Activated naive CD4-positive, alpha-beta T cell treated with anti-CD3 and anti-CD28 coated beads for 36 hours (primary cell): ENCODE measurements at regions of chr5 and their contacts with region 1.

Region 1: DNA sequence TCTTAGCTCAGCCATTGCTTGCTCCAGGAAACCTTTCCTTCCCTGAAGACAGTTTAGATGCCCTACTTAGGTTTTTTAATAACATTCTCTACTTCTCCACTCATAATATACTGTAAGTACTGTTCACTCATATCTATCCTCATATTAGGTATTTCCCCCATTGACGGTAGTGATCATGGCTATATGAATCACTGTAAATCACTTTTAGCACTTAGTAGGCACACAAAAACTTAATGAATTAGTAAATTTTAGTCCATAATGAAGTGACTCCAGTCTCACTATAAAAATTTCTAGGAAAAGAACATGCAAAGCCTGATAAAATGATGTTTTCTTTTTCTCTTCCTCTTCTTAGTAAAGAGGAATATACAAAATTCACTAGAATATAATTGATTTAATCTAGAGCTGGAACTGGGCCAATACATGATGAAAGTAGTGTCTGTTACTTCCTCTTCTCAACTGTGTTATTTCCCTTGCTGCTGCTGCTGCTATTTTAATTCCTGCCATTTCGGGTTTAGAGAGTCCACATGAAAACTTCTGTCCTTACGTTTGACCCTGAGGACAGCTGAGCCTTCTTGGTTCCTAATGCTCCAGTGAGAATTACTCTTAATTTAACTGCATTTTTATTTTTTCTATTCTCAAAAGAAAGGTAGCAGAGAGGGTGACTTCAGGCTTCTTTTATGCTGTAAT is 73.5 kb downstream of the LNPEP start:
- DNase-seq: no peak
- H3K4me3 Mint-ChIP-seq: no peak overlapping the region
- H3K27ac Mint-ChIP-seq: peak overlapping the region; percentile 62
- H3K4me1 Mint-ChIP-seq: peaks cover 18% of the 10 kb centered on the region
- H3K27me3 Mint-ChIP-seq: no peaks in the 10 kb centered on the region

Region 2: GRCh38 chr5:96957254-96958049 is 51.9 kb before region 1 on chr5:
- CTCF ChIA-PET with region 1: interaction called, 3 read pairs
- intact Hi-C with region 1: loop called (anchors 1 kb)
- DNase-seq: peak; percentile 73
- H3K4me3 Mint-ChIP-seq: peak overlapping the region; percentile 64
- H3K27ac Mint-ChIP-seq: peak overlapping the region; percentile 86
- H3K4me1 Mint-ChIP-seq: peaks cover 77% of the 10 kb centered on the region
- H3K27me3 Mint-ChIP-seq: no peaks in the 10 kb centered on the region

Region 3: DNA sequence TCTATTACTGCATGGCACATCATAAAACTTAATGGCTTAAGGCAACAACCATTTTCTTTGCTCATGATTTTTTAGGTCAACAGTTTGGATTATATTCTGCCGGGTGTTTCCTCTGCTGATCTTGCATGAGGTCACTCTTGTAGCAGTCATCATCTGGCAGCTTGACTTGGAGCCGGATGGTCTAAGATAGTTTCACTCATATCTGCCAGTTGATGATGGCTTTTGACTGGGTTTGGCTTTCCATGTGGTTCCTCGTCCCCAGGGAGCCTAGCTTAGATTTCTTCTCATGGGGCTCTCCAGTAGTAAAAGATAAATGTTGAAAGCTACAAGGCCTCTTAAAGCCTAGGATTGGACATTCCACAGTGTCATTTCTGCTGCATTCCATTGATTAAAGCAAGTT is 46.1 kb before region 1 on chr5:
- CTCF ChIA-PET with region 1: no interaction called
- intact Hi-C with region 1: loop called (anchors 1 kb)
- DNase-seq: peak; percentile 47
- H3K4me3 Mint-ChIP-seq: peak overlapping the region; percentile 69
- H3K27ac Mint-ChIP-seq: peak overlapping the region; percentile 95
- H3K4me1 Mint-ChIP-seq: peaks cover 73% of the 10 kb centered on the region
- H3K27me3 Mint-ChIP-seq: no peaks in the 10 kb centered on the region

Region 4: DNA sequence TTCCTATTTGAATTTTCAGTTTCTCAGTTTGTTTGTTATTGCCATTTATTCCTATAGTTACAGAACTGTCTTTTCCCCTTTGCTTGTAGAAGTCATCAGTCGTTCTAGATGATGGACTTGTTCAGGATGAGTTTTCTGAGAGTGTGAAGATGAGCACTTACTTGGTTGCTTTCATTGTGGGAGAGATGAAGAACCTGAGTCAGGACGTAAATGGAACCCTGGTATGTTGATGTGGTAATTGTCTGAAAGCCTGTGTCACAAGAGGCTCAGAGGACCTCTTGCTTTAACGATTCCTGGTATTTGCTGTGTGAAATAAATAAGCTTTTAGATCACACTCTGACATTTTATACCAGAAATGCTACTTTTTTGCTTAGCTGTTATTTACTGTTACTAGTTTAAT is 22.9 kb before region 1 on chr5:
- CTCF ChIA-PET with region 1: no interaction called
- intact Hi-C with region 1: loop called (anchors 2 kb)
- DNase-seq: no peak
- H3K4me3 Mint-ChIP-seq: no peak overlapping the region
- H3K27ac Mint-ChIP-seq: no peak overlapping the region
- H3K4me1 Mint-ChIP-seq: peaks cover 52% of the 10 kb centered on the region
- H3K27me3 Mint-ChIP-seq: no peaks in the 10 kb centered on the region

Region 5: DNA sequence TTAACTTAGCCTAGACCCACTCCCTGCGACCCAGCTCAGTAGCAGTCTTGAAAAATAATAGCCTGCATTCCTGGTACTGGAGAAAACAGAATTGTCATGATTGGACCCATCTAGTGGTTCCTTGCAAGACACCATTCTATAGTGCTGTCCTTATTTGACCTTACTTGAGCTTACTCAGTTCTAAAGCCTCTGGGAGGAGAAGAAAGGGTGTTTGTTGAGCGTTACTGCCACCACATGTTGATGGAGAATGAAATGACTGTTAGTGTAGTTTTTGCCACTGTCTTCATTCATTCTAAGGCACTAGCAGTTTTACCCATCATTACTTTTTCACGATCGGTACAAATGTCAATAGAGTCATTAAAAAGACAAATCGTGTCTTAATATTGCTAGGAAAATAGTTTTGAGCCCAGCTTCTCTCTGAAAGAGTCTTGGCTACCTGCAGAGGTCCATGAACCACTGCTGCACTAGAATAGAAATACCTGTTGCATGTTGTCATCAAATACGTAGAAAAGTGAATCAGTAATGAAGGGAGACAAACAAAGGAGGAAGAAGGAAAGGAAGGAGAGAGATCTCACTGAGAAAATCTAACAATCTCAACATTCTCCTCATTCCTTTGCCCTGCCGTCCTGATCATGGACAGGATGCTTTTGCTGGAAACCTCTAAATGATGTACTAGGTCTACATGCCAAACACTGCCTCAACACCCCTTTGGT is 37.1 kb after region 1 on chr5:
- CTCF ChIA-PET with region 1: no interaction called
- intact Hi-C with region 1: no loop called
- DNase-seq: peak; percentile 50
- H3K4me3 Mint-ChIP-seq: no peak overlapping the region
- H3K27ac Mint-ChIP-seq: no peak overlapping the region
- H3K4me1 Mint-ChIP-seq: no peaks in the 10 kb centered on the region
- H3K27me3 Mint-ChIP-seq: no peaks in the 10 kb centered on the region

Region 6: GRCh38 chr5:97094579-97095317 is 85.4 kb after region 1 on chr5:
- CTCF ChIA-PET with region 1: no interaction called
- intact Hi-C with region 1: loop called (anchors 2 kb)
- DNase-seq: peak; percentile 68
- H3K4me3 Mint-ChIP-seq: no peak overlapping the region
- H3K27ac Mint-ChIP-seq: no peak overlapping the region
- H3K4me1 Mint-ChIP-seq: peaks cover 16% of the 10 kb centered on the region
- H3K27me3 Mint-ChIP-seq: peaks cover 6% of the 10 kb centered on the region